ENCODE measurements at regions of chr2 and their contacts with region 1.

Region 1: DNA sequence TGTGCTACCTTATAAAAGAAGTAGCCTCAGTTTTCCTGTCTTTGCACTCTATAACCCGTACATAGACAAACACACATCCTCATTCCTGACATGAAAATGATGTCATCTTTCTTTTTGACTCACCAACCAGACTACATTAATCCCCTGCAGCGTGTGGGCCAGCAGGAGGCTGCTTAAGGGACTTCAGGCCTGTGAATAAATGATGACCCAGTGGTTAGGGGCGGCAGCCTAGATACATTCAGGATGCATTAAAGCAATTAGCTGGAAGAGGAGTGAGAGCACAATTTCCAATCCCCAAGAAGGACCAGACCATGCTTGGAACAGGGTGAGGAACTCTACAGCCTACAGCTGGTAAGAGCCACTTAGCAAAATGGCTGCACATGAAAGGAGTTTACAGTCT is 57.3 kb upstream of the KLF7 start:
- DNase-seq: no peak
- H3K4me3 Mint-ChIP-seq: peak overlapping the region; percentile 23
- H3K27ac Mint-ChIP-seq: peak overlapping the region; percentile 57
- H3K4me1 Mint-ChIP-seq: peaks cover 45% of the 10 kb centered on the region
- H3K27me3 Mint-ChIP-seq: no peaks in the 10 kb centered on the region

Region 2: GRCh38 chr2:207046724-207047123 is 176.3 kb before region 1 on chr2:
- intact Hi-C with region 1: loop called (anchors 10 kb)
- DNase-seq: peak; percentile 17
- H3K4me3 Mint-ChIP-seq: no peak overlapping the region
- H3K27ac Mint-ChIP-seq: no peak overlapping the region
- H3K4me1 Mint-ChIP-seq: peaks cover 12% of the 10 kb centered on the region
- H3K27me3 Mint-ChIP-seq: peaks cover 10% of the 10 kb centered on the region

Region 3: DNA sequence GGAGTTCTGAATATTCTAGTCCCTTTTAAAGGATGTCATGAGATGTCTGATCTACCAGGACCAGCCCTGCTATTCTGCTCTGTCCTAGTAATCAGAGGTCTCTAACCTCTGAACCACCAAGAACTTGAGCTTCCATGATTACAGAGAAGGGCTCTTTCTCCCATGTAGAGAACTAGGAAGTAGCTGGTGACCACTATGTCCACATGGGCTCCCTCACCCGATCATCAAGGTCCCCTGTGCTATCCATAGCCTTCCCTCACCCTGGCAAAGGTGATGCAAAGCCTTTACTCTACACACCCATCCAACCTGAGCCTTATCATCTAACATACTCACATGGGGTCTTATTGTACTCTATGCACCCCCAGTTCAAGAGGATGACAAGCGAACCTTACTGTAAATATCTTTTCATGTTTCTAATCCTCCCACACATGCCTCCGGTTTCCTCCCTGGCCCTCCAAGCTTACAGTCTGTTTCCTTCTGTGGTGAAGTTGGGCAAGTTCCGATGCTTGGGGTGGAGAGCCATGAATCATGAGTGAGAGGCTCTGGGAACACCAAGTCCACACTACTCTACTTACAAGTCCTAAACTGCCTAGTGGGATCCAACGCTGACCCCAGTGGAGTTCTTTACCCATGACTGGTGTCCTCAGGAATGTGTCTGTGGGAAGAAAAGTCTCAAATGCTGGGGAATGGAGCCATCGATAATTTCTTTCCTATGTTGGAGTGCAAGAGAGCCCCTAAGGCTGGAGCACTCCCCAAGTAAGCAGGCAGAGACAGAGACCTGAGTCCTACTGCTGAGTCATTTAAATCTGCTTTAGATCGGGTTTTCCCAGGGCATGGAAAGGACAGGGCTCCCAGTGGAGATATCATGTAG is 16.0 kb after region 1 on chr2:
- intact Hi-C with region 1: loop called (anchors 1 kb)
- DNase-seq: no peak
- H3K4me3 Mint-ChIP-seq: peak overlapping the region; percentile 64
- H3K27ac Mint-ChIP-seq: peak overlapping the region; percentile 84
- H3K4me1 Mint-ChIP-seq: peaks cover 29% of the 10 kb centered on the region
- H3K27me3 Mint-ChIP-seq: no peaks in the 10 kb centered on the region

Region 4: DNA sequence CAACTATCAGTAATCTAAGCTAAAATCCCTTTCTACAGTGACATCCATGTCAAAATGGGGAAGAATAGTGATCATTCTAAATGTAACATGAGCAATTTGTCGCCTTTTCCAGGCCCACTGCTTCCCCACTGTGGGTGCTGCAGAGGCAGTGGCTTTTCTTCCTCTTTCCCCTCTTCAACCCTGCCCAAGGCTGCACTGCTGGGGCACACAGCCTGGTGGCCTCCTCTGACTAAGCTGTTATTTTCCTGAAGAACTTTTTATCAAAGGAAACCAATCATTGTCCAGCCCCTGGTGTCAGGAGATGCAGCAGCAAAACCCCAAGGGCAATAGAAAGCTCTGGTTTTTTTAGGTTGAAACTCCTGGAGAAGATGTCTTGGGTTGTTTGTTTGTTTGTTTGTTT is 60.3 kb after region 1 on chr2:
- intact Hi-C with region 1: loop called (anchors 1 kb)
- DNase-seq: no peak
- H3K4me3 Mint-ChIP-seq: peak overlapping the region; percentile 55
- H3K27ac Mint-ChIP-seq: peak overlapping the region; percentile 82
- H3K4me1 Mint-ChIP-seq: peaks cover 67% of the 10 kb centered on the region
- H3K27me3 Mint-ChIP-seq: no peaks in the 10 kb centered on the region

Region 5: GRCh38 chr2:207473049-207473930 is 250.2 kb after region 1 on chr2:
- intact Hi-C with region 1: loop called (anchors 1 kb)
- DNase-seq: peak; percentile 37
- H3K4me3 Mint-ChIP-seq: no peak overlapping the region
- H3K27ac Mint-ChIP-seq: no peak overlapping the region
- H3K4me1 Mint-ChIP-seq: peaks cover 38% of the 10 kb centered on the region
- H3K27me3 Mint-ChIP-seq: no peaks in the 10 kb centered on the region

Measured in activated T-helper 2 cell treated with anti-CD3 and anti-CD28 coated beads, Interferon-gamma antibody, Interleukin-2, Interleukin-4, amounts not matched to agents 10 μg/mL and 5 μg/mL and 100 μg/mL, durations not matched to agents 14 hours and 24 hours and 36 hours (primary cell).